ENCODE measurements at regions of chr21 and their contacts with region 1.

Region 1: DNA sequence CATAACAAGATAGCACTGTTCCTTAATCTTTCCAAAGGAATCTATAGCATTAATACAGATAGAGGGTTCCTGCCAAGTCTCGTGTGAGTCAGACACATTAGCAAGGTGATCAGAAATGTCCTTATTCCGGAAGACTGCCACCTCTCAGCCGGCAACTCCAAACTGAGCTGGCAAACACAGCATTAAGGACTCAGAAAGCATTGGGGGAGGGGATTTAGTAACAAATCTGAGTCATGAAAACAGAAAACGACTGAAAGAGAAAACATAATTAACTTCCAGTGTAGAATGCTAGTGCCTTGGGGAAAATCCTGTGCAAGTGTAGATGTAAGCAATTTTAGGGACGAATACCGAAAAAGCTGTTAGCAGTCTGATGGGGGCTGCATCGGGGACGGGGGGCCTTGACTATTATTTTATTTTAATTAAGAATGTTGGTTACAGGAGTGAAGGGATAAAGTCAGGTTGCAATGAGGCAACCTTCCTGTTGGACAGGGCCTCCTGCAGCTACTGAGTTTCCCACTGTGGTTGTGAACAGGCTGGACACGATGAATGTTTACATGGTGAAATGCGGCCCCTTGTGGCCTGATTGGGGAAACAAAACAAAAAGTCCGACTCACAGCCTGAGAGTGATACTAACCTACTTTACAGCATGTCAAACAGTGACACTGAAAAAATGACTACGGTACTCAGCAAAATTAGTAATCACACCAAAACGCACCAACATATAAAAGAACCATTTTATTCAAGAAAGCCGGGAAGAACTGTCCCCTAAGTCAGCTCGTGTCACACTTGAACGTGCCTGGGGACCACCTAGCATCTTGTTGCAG is 20.7 kb downstream of the MIS18A start:
- DNase-seq: peak; percentile 63 to 72
- H3K4me3 ChIP-seq: no peak overlapping the region
- H3K4me3 Mint-ChIP-seq: no peak overlapping the region
- H3K27ac Mint-ChIP-seq: no peak overlapping the region
- H3K4me1 ChIP-seq: no peaks in the 10 kb centered on the region
- H3K4me1 Mint-ChIP-seq: no peaks in the 10 kb centered on the region
- H3K27me3 ChIP-seq: no peaks in the 10 kb centered on the region
- H3K27me3 Mint-ChIP-seq: peaks cover 14% of the 10 kb centered on the region
- CTCF ChIP-seq: peak; percentile 67 to 76

Region 2: DNA sequence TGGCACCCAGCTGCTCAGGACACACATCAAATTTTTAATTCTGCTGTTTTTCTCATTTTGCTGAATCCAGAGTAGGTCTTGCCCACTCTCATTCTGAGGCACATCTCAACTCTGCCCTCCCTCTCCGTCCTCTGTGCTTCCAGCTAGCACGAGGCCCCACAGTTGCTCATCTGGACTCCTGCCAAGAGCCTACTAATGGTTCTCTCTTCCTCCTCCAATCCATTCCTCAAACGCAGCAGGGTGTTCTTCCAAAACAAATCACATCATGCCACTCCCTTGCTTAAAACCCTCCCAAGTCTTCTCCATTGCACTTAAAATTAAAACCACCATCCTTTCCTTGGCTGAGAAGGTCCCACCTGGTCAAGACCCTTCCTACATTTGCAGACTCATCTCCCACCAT is 476.4 kb before region 1 on chr21:
- CTCF ChIA-PET with region 1: interaction called, 12 read pairs
- POLR2A ChIA-PET with region 1: no interaction called
- intact Hi-C with region 1: loop called (anchors 1 kb)
- DNase-seq: no peak
- H3K4me3 ChIP-seq: no peak overlapping the region
- H3K4me3 Mint-ChIP-seq: no peak overlapping the region
- H3K27ac Mint-ChIP-seq: no peak overlapping the region
- H3K4me1 ChIP-seq: no peaks in the 10 kb centered on the region
- H3K4me1 Mint-ChIP-seq: no peaks in the 10 kb centered on the region
- H3K27me3 ChIP-seq: no peaks in the 10 kb centered on the region
- H3K27me3 Mint-ChIP-seq: peaks cover 17% of the 10 kb centered on the region
- CTCF ChIP-seq: no peak

Region 3: DNA sequence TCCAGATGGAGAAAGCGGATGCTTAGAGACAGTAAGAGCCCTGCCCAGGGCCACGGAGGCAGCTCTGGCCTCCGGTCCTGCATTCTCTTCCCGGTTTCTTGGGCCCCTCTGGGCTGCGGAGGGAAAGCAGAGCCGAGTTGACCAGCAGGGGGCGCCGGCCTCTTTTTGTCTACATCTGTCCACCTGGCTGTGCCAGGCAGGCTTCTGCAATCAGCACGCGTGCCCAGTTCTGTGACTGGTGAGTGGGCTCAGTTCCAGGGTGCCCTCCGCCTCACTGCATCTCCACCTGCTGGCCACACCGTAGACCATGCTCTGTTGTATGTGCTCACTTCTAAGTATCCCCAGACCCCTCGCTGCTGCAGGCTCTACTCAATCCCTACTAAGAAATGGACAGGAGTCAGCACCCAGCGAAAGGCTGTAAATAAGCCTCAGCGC is 392.1 kb before region 1 on chr21:
- CTCF ChIA-PET with region 1: interaction called, 8 read pairs
- POLR2A ChIA-PET with region 1: no interaction called
- intact Hi-C with region 1: loop called (anchors 1 kb)
- DNase-seq: peak; percentile 79 to 82
- H3K4me3 ChIP-seq: no peak overlapping the region
- H3K4me3 Mint-ChIP-seq: no peak overlapping the region
- H3K27ac Mint-ChIP-seq: no peak overlapping the region
- H3K4me1 ChIP-seq: no peaks in the 10 kb centered on the region
- H3K4me1 Mint-ChIP-seq: no peaks in the 10 kb centered on the region
- H3K27me3 ChIP-seq: peaks cover 2% of the 10 kb centered on the region
- H3K27me3 Mint-ChIP-seq: peaks cover 12% of the 10 kb centered on the region
- CTCF ChIP-seq: peak; percentile 77 to 83

Region 4: GRCh38 chr21:31991356-31992331 is 266.5 kb before region 1 on chr21:
- CTCF ChIA-PET with region 1: no interaction called
- POLR2A ChIA-PET with region 1: no interaction called
- intact Hi-C with region 1: loop called (anchors 10 kb)
- DNase-seq: peak in 1 of 2 experiments; percentile 11
- H3K4me3 ChIP-seq: no peak overlapping the region
- H3K4me3 Mint-ChIP-seq: no peak overlapping the region
- H3K27ac Mint-ChIP-seq: no peak overlapping the region
- H3K4me1 ChIP-seq: no peaks in the 10 kb centered on the region
- H3K4me1 Mint-ChIP-seq: peaks cover 4% of the 10 kb centered on the region
- H3K27me3 ChIP-seq: no peaks in the 10 kb centered on the region
- H3K27me3 Mint-ChIP-seq: no peaks in the 10 kb centered on the region
- CTCF ChIP-seq: no peak

Region 5: DNA sequence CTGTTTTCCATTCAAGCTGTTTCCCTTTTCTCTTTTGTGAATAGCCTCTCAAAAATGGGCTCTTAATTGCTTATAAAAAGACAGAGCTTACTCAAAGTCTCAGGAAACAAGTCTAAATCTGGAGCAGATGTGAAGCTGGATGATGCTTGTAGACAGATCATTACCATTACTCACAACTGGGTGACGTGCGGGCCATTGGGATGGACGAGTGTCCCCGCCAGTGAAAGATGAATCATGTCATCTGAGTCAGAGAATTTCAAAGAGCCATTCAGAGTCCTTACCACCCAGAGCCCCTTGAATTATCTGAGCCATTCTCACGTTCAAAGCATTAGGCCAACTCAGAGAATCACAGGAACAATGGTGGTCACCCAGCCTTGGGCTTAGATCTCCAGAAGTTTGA is 250.7 kb before region 1 on chr21:
- CTCF ChIA-PET with region 1: no interaction called
- POLR2A ChIA-PET with region 1: no interaction called
- intact Hi-C with region 1: no loop called
- DNase-seq: no peak
- H3K4me3 ChIP-seq: no peak overlapping the region
- H3K4me3 Mint-ChIP-seq: no peak overlapping the region
- H3K27ac Mint-ChIP-seq: no peak overlapping the region
- H3K4me1 ChIP-seq: no peaks in the 10 kb centered on the region
- H3K4me1 Mint-ChIP-seq: no peaks in the 10 kb centered on the region
- H3K27me3 ChIP-seq: no peaks in the 10 kb centered on the region
- H3K27me3 Mint-ChIP-seq: peaks cover 3% of the 10 kb centered on the region
- CTCF ChIP-seq: no peak

Region 6: GRCh38 chr21:32329331-32329730 is 71.2 kb after region 1 on chr21:
- CTCF ChIA-PET with region 1: no interaction called
- POLR2A ChIA-PET with region 1: no interaction called
- intact Hi-C with region 1: no loop called
- DNase-seq: no peak
- H3K4me3 ChIP-seq: no peak overlapping the region
- H3K4me3 Mint-ChIP-seq: no peak overlapping the region
- H3K27ac Mint-ChIP-seq: no peak overlapping the region
- H3K4me1 ChIP-seq: no peaks in the 10 kb centered on the region
- H3K4me1 Mint-ChIP-seq: no peaks in the 10 kb centered on the region
- H3K27me3 ChIP-seq: no peaks in the 10 kb centered on the region
- H3K27me3 Mint-ChIP-seq: no peaks in the 10 kb centered on the region
- CTCF ChIP-seq: no peak

Region 7: DNA sequence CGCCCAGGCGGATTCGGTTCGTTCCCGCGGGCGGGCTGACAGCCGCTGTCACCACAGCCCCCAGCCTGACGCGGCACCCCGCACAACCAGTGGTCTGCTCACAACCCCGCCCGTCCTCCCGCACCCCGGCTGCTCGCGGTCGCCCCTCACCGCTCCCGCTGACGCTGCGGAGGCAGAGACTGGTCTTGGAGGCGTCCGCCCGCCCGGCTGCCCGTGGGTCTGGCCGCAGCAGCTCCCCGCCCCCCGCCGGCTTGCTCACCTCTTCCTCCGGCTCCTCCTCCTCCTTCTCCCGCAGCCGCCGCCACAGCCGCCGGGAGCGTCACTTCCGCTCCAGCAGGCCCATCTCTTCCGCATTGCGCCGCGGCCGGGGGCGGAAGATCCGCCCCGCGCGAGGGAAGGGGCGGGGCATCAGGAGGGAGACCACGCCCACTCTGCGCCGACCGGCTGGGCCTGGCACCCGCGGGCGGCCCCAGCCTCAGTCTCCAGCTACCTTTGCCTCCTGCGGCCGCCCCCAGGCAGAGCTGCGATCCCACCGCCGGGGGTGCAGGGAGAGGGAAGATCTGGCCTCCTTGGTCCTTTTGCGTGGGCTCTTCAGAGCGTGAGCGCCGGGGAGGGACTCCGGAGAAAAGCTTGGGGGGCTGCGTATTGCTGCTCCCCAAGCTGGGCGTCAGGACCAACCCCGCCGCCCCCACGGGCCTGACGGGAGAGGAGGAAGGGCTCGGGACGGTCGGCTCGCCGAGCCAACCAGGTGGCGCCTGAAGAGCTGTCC is 469.7 kb after region 1 on chr21 and contains the start of gene SYNJ1:
- CTCF ChIA-PET with region 1: no interaction called
- POLR2A ChIA-PET with region 1: no interaction called
- intact Hi-C with region 1: no loop called
- DNase-seq: peak; percentile 95
- H3K4me3 ChIP-seq: peak within 1 kb of the TSS; percentile 97
- H3K4me3 Mint-ChIP-seq: peak within 1 kb of the TSS; percentile 99
- H3K27ac Mint-ChIP-seq: peak within 1 kb of the TSS; percentile 91
- H3K4me1 ChIP-seq: peaks cover 4% of the 10 kb centered on the region; the same call in 1 of the 2 replicates
- H3K4me1 Mint-ChIP-seq: peaks cover 6% of the 10 kb centered on the region
- H3K27me3 ChIP-seq: no peaks in the 10 kb centered on the region
- H3K27me3 Mint-ChIP-seq: no peaks in the 10 kb centered on the region
- CTCF ChIP-seq: no peak
- total RNA-seq, gene SYNJ1: 8.3 and 11.5 TPM in 2 replicates

Measured in Caco-2 (cell line).